B cell (primary cell): ENCODE measurements at regions of chr1 and their contacts with region 1.

Region 1: GRCh38 chr1:171485375-171486047 is at the start of gene PRRC2C:
- DNase-seq: peak; percentile 97
- ATAC-seq: peak; percentile 92
- H3K4me3 ChIP-seq: peak within 1 kb of the TSS; percentile 97 to 100 (median 99)
- H3K4me3 Mint-ChIP-seq: peak within 1 kb of the TSS; percentile 93
- H3K27ac ChIP-seq: peak within 1 kb of the TSS; percentile 99 to 100
- H3K27ac Mint-ChIP-seq: peak within 1 kb of the TSS; percentile 94
- H3K4me1 ChIP-seq: peaks cover 25 to 47% of the 10 kb centered on the region in 2 donors
- H3K4me1 Mint-ChIP-seq: peaks cover 47% of the 10 kb centered on the region
- H3K27me3 ChIP-seq: no peaks in the 10 kb centered on the region
- H3K27me3 Mint-ChIP-seq: no peaks in the 10 kb centered on the region
- CTCF ChIP-seq: peak; percentile 83
- total RNA-seq, gene PRRC2C: 300 and 305 TPM in 2 replicates

Region 2: DNA sequence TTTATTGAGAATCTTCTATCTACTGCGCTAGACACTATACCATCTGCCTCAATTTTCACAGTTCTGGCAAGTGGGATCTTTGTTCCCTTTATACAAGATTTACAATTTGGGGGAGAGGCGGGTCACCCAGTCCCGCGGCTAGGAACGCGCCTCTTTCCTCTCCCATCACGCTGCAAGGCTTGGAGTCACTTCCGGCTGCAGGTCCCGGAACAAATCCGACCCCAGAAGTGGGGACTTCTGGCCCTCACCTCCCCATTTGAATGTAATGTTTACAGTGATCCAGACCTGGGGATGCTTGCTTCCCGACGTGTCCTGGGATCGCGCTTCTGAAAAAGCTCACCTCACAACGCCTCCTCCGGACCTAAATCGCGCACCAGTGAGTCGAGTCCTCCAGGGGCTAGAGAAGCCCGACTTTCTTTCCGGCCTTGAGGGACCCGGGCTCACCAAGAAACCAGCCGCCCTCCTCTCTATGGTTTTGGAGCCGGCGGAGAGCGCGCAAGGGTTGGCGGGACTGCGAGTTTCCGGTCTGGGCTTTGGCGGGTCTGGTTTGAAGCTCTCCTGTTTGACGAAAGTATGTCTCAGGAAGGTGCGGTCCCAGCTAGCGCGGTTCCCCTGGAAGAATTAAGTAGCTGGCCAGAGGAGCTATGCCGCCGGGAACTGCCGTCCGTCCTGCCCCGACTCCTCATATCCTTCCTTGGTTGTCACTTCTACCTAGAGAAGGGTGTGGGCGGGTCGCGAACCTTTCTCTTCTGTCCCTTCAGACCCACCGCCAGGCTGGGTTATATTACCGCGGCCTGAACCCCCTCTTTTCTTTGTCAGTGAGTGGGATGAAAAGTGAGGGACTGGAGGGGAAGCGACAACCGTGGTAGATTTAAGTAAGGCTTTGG is 1690.7 kb before region 1 on chr1 and contains the start of gene METTL18:
- CTCF ChIA-PET with region 1: no interaction called
- POLR2A ChIA-PET with region 1: interaction called, 3 read pairs
- intact Hi-C with region 1: loop called (anchors 5 kb)
- DNase-seq: peak; percentile 96
- ATAC-seq: peak; percentile 99
- H3K4me3 ChIP-seq: peak within 1 kb of the TSS; percentile 70 to 99 (median 94)
- H3K4me3 Mint-ChIP-seq: peak within 1 kb of the TSS; percentile 96
- H3K27ac ChIP-seq: peak within 1 kb of the TSS; percentile 72 to 91
- H3K27ac Mint-ChIP-seq: peak within 1 kb of the TSS; percentile 96
- H3K4me1 ChIP-seq: peaks cover 15 to 16% of the 10 kb centered on the region in 2 donors
- H3K4me1 Mint-ChIP-seq: peaks cover 45% of the 10 kb centered on the region
- H3K27me3 ChIP-seq: no peaks in the 10 kb centered on the region
- H3K27me3 Mint-ChIP-seq: no peaks in the 10 kb centered on the region
- CTCF ChIP-seq: no peak
- total RNA-seq, gene METTL18: 16.9 and 18.9 TPM in 2 replicates

Region 3: DNA sequence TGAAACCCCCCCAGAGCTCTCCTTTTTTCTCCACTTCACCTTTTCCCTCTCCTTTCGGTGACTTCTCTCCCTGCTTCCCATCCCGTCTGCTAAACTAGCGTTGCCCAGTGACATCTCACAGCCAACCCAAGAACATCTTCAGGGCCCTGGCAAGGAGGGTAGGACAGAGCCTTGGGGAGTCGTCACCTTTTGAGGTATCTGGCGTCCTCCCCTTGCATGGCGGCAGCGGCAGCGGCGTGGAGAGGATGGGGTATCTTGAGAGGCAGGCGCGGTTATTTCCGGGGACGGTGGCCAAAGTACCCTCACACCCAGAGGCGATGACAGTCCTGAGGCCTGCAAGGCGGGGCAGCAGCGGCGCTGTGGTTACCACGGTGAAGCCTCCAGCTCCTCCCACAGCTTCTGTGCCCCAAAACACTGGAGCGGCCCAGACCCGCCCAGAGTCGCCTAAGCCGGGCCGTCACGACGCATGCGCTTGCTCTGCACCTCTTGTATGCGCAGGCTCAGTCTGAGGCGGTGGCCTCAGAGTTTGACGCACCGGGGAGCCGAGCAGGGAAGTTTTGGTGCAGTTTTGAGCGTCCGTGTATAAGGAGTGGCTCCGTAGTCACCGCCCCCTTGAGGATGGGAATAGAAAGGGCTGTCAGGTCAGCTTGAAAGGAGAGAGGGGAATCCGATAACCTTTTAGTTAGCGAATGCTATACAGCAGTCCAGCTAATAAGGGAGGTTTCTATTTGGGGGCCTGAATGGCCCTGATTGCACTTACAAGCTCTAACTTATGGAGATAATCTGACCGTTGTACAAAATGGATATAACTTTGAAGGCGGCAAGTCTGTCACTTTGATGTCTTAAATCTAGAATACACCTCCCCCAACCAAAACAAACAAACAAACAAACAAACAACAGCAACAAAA is 1411.0 kb before region 1 on chr1 and contains the start of gene KIFAP3:
- CTCF ChIA-PET with region 1: no interaction called
- POLR2A ChIA-PET with region 1: no interaction called
- intact Hi-C with region 1: loop called (anchors 2 kb)
- DNase-seq: peak; percentile 98
- ATAC-seq: peak; percentile 93
- H3K4me3 ChIP-seq: peak within 1 kb of the TSS; percentile 43 to 78 (median 66)
- H3K4me3 Mint-ChIP-seq: peak within 1 kb of the TSS; percentile 92
- H3K27ac ChIP-seq: peak within 1 kb of the TSS; percentile 63 to 84
- H3K27ac Mint-ChIP-seq: peak within 1 kb of the TSS; percentile 95
- H3K4me1 ChIP-seq: peaks cover 19 to 20% of the 10 kb centered on the region in 2 donors
- H3K4me1 Mint-ChIP-seq: peaks cover 44% of the 10 kb centered on the region
- H3K27me3 ChIP-seq: no peaks in the 10 kb centered on the region
- H3K27me3 Mint-ChIP-seq: peaks cover 11% of the 10 kb centered on the region
- CTCF ChIP-seq: peak; percentile 52
- total RNA-seq, gene KIFAP3: 14.1 and 14.9 TPM in 2 replicates

Region 4: DNA sequence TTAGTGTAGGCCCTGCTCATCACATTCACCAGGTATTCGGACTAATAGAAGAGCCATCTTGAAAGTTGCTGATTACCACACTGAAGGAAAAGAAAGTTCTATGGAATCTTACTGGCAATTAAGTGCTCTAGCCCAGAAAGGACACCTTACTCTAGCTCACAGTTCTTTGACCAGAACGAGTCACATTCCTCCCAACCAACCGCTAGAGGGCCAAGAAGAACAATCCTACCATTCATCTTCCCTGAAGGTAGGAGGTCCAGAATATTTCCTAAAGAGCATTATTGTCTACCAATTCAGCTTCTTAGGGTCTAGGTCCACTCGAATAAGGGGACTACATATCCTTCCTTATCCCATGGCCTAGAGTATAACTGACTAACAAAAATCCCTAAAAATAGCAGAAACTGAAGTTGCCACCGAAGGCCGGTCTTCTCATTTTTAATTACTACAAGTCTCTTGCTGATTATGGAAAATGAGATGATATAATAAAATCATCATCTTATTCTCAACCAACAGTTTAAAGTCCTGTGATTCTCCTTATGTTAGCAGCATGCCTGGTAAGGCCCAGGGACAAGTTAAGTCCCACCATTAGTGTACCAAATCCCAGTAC is 239.9 kb before region 1 on chr1:
- CTCF ChIA-PET with region 1: no interaction called
- POLR2A ChIA-PET with region 1: no interaction called
- intact Hi-C with region 1: no loop called
- DNase-seq: peak; percentile 45
- ATAC-seq: peak; percentile 33
- H3K4me3 ChIP-seq: no peak overlapping the region
- H3K4me3 Mint-ChIP-seq: no peak overlapping the region
- H3K27ac ChIP-seq: no peak overlapping the region
- H3K27ac Mint-ChIP-seq: no peak overlapping the region
- H3K4me1 ChIP-seq: no peaks in the 10 kb centered on the region
- H3K4me1 Mint-ChIP-seq: no peaks in the 10 kb centered on the region
- H3K27me3 ChIP-seq: peaks cover 0 to 7% (median 0%) of the 10 kb centered on the region in 4 experiments
- H3K27me3 Mint-ChIP-seq: peaks cover 19% of the 10 kb centered on the region
- CTCF ChIP-seq: peak; percentile 81

Region 5: GRCh38 chr1:171313835-171314320 is 171.6 kb before region 1 on chr1 and contains the start of gene FMO4:
- CTCF ChIA-PET with region 1: interaction called, 5 read pairs
- POLR2A ChIA-PET with region 1: no interaction called
- intact Hi-C with region 1: loop called (anchors 5 kb)
- DNase-seq: peak; percentile 94
- ATAC-seq: peak; percentile 100
- H3K4me3 ChIP-seq: peak within 1 kb of the TSS; percentile 6 to 58 (median 8)
- H3K4me3 Mint-ChIP-seq: peak within 1 kb of the TSS; percentile 88
- H3K27ac ChIP-seq: peak within 1 kb of the TSS; percentile 51 to 86
- H3K27ac Mint-ChIP-seq: peak within 1 kb of the TSS; percentile 93
- H3K4me1 ChIP-seq: peaks cover 14% of the 10 kb centered on the region in 2 donors
- H3K4me1 Mint-ChIP-seq: peaks cover 19% of the 10 kb centered on the region
- H3K27me3 ChIP-seq: no peaks in the 10 kb centered on the region
- H3K27me3 Mint-ChIP-seq: no peaks in the 10 kb centered on the region
- CTCF ChIP-seq: peak; percentile 89
- total RNA-seq, gene FMO4: 3.0 and 3.5 TPM in 2 replicates

Region 6: GRCh38 chr1:171434717-171435346 is 50.7 kb before region 1 on chr1:
- CTCF ChIA-PET with region 1: no interaction called
- POLR2A ChIA-PET with region 1: no interaction called
- intact Hi-C with region 1: no loop called
- DNase-seq: no peak
- ATAC-seq: no peak
- H3K4me3 ChIP-seq: no peak overlapping the region
- H3K4me3 Mint-ChIP-seq: no peak overlapping the region
- H3K27ac ChIP-seq: no peak overlapping the region
- H3K27ac Mint-ChIP-seq: no peak overlapping the region
- H3K4me1 ChIP-seq: no peaks in the 10 kb centered on the region
- H3K4me1 Mint-ChIP-seq: no peaks in the 10 kb centered on the region
- H3K27me3 ChIP-seq: peaks cover 0 to 3% (median 0%) of the 10 kb centered on the region in 4 experiments
- H3K27me3 Mint-ChIP-seq: peaks cover 21% of the 10 kb centered on the region
- CTCF ChIP-seq: no peak

Region 7: DNA sequence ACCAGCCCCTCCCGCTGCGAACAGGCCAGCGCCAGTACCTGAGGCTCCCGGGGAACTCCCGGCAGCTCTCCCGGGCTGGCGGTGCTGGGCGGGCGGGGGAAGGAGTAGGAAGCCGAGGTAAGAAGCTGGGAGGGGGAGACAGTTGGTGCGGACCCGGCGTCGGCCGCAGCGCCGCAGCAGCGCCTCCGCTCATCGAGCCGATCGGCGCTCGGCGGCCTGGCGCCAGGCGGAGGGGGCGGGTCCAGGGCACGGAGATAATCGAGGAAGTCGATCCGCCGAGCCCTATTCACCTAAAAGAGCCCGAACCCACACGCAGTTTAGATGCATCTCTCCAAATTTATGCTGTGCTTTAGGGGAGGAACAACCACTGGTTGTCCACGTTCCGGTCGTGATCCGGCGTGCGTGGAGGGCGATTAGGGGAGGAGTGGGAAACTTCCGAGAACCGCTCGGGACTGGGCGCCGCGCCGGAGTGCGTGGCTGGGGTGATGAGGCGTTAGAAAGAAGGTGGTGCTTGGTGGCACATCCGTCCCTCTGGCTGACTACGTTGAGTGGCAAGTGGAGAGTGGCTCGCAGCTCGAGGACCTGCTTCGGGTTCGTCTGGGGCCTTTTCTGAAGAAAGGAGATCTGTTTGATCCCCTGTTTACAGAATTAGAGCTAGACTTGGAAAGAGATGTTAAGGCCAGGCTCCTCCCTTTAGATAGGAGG is 256.5 kb after region 1 on chr1 and contains the start of gene VAMP4:
- CTCF ChIA-PET with region 1: interaction called, 5 read pairs
- POLR2A ChIA-PET with region 1: no interaction called
- intact Hi-C with region 1: loop called (anchors 2 kb)
- DNase-seq: peak; percentile 92
- ATAC-seq: peak; percentile 90
- H3K4me3 ChIP-seq: peak within 1 kb of the TSS; percentile 69 to 95 (median 93)
- H3K4me3 Mint-ChIP-seq: peak within 1 kb of the TSS; percentile 100
- H3K27ac ChIP-seq: peak within 1 kb of the TSS; percentile 91
- H3K27ac Mint-ChIP-seq: peak within 1 kb of the TSS; percentile 100
- H3K4me1 ChIP-seq: peaks cover 20 to 23% of the 10 kb centered on the region in 2 donors
- H3K4me1 Mint-ChIP-seq: peaks cover 40% of the 10 kb centered on the region
- H3K27me3 ChIP-seq: no peaks in the 10 kb centered on the region
- H3K27me3 Mint-ChIP-seq: no peaks in the 10 kb centered on the region
- CTCF ChIP-seq: no peak
- total RNA-seq, gene VAMP4: 17.5 and 21.8 TPM in 2 replicates

Region 8: DNA sequence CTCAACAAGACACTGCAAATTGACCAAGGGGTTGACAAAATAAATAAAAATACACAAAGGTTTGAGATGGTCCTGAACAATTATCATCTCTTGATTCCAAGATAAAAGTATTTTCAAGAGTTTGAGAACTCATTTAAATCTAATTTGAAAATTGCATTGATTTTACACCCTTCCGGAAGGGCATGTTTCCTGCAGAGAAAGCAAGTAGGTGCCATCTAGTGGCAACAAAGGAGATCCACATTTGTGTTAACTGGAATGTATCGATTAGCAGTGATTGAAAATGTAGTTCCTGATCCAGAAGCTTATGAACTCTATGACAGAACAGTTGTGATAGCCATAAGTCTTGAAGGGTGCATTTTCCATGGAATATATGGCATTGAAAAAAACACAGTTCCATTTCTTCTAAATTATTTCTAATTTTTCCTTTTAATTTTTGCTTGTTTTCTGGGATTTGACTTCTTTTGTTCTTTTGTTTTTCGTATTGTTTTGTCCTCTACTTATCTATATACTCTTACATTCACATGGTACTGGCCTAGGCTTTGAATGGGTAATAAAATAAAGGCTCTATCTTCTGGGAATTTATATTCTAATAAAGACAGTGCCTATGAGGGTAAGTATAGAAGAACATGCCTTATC is 499.5 kb after region 1 on chr1:
- CTCF ChIA-PET with region 1: interaction called, 3 read pairs
- POLR2A ChIA-PET with region 1: no interaction called
- intact Hi-C with region 1: loop called (anchors 10 kb)
- DNase-seq: peak; percentile 49
- ATAC-seq: peak; percentile 41
- H3K4me3 ChIP-seq: no peak overlapping the region
- H3K4me3 Mint-ChIP-seq: no peak overlapping the region
- H3K27ac ChIP-seq: no peak overlapping the region
- H3K27ac Mint-ChIP-seq: no peak overlapping the region
- H3K4me1 ChIP-seq: no peaks in the 10 kb centered on the region
- H3K4me1 Mint-ChIP-seq: no peaks in the 10 kb centered on the region
- H3K27me3 ChIP-seq: no peaks in the 10 kb centered on the region
- H3K27me3 Mint-ChIP-seq: peaks cover 4% of the 10 kb centered on the region
- CTCF ChIP-seq: peak; percentile 75